Activated T-helper 1 cell treated with anti-CD3 and anti-CD28 coated beads, Interleukin-12 subunit alpha, Interleukin-12 subunit beta, Interleukin-2, Interleukin-4 antibody, amounts not matched to agents 30 ng/mL and 10 ng/mL and 1 ng/mL, durations not matched to agents 14 hours and 24 hours and 36 hours (primary cell): ENCODE measurements at regions of chr6 and their contacts with region 1.

Region 1: DNA sequence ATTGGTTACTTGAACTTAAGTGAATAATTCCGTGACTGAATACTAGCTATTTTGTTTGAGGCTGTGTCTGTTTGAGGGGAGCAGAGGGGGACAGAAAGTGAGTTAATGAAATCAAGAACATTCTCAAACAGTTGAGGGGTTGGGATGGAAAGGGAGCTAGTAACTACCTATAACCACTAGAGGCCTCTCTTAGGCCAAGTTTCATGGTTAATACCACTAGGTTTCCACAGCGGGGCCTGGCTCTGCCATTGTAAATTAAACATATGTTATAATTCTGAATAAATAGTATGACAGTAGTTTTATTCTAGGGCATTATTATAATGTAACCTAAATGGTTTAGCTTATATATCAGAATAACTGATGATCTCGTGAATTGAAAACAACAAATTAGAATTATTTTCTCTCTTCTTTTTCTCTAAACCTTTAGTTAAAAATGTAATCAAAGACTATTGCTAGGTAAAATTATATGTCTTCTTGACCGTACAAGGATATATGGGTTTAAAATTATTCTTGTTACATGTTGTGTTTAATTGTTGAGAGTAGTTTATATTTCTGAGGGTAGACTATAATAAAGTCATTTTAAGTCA is 108.1 kb downstream of the BCKDHB start:
- DNase-seq: no peak
- H3K4me3 Mint-ChIP-seq: no peak overlapping the region
- H3K27ac Mint-ChIP-seq: no peak overlapping the region
- H3K4me1 Mint-ChIP-seq: peaks cover 7% of the 10 kb centered on the region
- H3K27me3 Mint-ChIP-seq: no peaks in the 10 kb centered on the region

Region 2: DNA sequence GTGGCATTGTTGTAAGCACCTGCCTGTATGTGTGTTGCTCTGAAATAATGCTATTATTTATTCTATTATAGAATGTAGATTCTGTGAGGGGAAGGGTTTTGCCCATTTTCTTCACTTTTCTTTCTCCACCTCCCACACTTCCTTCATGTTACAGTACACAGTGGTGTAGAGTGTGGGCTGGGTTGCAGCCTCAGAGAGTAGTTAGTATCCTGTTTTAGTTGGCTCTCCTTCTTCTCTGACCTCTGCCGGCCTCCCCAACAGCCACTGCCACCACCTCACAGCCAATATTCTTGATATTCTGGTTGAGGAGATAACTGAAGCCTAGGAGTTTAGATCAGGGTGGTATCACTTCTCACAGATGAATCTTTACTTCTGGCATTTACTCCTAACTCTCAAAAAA is 35.4 kb after region 1 on chr6:
- intact Hi-C with region 1: loop called (anchors 5 kb)
- DNase-seq: no peak
- H3K4me3 Mint-ChIP-seq: no peak overlapping the region
- H3K27ac Mint-ChIP-seq: no peak overlapping the region
- H3K4me1 Mint-ChIP-seq: peaks cover 13% of the 10 kb centered on the region
- H3K27me3 Mint-ChIP-seq: peaks cover 2% of the 10 kb centered on the region

Region 3: GRCh38 chr6:80338201-80338836 is 123.8 kb after region 1 on chr6:
- intact Hi-C with region 1: loop called (anchors 2 kb)
- DNase-seq: peak; percentile 32
- H3K4me3 Mint-ChIP-seq: no peak overlapping the region
- H3K27ac Mint-ChIP-seq: no peak overlapping the region
- H3K4me1 Mint-ChIP-seq: no peaks in the 10 kb centered on the region
- H3K27me3 Mint-ChIP-seq: no peaks in the 10 kb centered on the region

Region 4: DNA sequence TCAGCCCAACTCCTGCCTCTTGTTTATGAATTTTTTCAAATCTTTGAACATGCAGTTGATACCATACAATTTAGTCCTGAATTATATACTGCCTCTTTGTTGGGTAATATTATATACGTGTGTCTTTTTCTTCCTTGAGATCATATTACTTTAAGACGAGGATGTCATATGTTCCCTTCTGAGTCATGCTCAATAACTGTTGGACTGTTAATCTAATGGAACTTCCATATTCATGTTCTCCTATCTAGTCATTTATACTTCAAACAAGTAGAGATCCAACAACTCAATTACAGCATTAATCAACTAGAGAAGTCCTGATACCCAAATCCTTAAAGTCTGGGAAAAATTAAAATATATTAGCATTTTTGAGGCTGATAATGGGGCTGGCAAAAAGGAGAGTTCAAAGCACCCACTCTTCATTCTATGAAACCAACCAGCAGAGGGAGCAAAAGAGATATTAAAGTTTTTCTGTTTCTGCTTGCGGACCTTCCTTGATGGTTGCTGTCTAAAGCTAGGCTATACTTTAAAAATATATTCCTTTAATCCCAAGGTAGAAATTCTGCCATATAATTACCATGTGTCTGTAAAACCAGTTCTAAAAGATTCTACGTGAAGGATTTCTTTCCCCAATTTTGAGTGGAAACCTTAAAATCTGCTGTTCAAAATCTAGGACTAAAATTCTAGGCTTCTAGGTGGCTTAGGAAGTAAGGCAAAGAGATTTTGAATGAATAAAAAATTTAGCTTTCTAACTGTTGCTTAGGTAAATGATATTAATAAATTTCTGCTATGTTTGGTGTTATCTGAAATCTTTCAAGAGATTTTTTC is 390.8 kb after region 1 on chr6:
- intact Hi-C with region 1: loop called (anchors 10 kb)
- DNase-seq: no peak
- H3K4me3 Mint-ChIP-seq: no peak overlapping the region
- H3K27ac Mint-ChIP-seq: no peak overlapping the region
- H3K4me1 Mint-ChIP-seq: no peaks in the 10 kb centered on the region
- H3K27me3 Mint-ChIP-seq: peaks cover 6% of the 10 kb centered on the region